Activated naive CD4-positive, alpha-beta T cell treated with anti-CD3 and anti-CD28 coated beads, Interleukin-2, amount 10 ng/mL, durations not matched to agents 7 days and 5 days (primary cell): ENCODE measurements at regions of chr22 and their contacts with region 1.

Region 1: GRCh38 chr22:43993027-43993760 is 30.9 kb upstream of the PARVB start:
- DNase-seq: peak; percentile 69
- H3K4me3 Mint-ChIP-seq: no peak overlapping the region
- H3K27ac Mint-ChIP-seq: no peak overlapping the region
- H3K4me1 Mint-ChIP-seq: peaks cover 33% of the 10 kb centered on the region
- H3K27me3 Mint-ChIP-seq: no peaks in the 10 kb centered on the region

Region 2: GRCh38 chr22:44003405-44004103 is 10.4 kb after region 1 on chr22:
- CTCF ChIA-PET with region 1: interaction called, 10 read pairs
- DNase-seq: no peak
- H3K4me3 Mint-ChIP-seq: no peak overlapping the region
- H3K27ac Mint-ChIP-seq: no peak overlapping the region
- H3K4me1 Mint-ChIP-seq: no peaks in the 10 kb centered on the region
- H3K27me3 Mint-ChIP-seq: no peaks in the 10 kb centered on the region

Region 3: GRCh38 chr22:44026630-44027511 is 33.7 kb after region 1 on chr22:
- CTCF ChIA-PET with region 1: interaction called, 14 read pairs
- DNase-seq: peak; percentile 79
- H3K4me3 Mint-ChIP-seq: peak overlapping the region; percentile 58
- H3K27ac Mint-ChIP-seq: peak overlapping the region; percentile 85
- H3K4me1 Mint-ChIP-seq: peaks cover 49% of the 10 kb centered on the region
- H3K27me3 Mint-ChIP-seq: peaks cover 35% of the 10 kb centered on the region

Region 4: DNA sequence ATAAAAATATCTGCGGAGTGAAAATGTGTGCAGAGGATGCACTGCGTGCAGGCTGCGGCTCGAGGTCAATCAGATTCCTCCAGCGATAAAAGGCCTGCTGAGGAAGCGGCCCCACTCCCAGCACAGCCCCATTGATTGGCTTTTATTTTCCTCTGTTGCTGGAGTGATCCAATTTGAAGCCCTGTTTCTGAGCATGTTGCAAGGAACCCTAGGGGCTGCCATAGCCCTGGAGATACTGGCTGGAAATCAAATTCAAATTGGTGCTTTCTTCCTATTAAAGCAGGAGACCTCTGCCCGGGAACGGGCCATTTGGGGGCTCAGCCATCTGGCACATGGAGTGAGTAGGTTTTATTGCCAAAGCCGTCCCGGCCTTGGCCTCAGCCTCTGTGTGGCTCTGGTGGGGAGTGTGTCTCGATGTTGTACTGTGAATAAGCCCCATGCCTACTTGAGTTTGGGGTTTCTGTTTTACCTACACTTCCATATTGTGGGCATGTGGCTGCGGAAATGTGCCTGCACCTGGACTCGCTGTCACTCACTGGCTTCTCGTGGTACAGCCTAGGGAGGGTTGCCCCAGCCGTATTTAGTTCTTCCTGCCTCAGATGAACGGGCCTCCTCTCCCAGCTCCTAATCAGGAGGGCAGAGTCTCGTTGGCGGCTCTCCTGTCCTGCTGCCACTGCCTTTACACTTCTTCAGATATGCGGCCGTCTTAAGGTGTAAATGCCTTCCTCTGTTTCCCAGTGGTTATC is 56.5 kb after region 1 on chr22:
- CTCF ChIA-PET with region 1: interaction called, 10 read pairs
- DNase-seq: no peak
- H3K4me3 Mint-ChIP-seq: no peak overlapping the region
- H3K27ac Mint-ChIP-seq: peak overlapping the region; percentile 15
- H3K4me1 Mint-ChIP-seq: peaks cover 40% of the 10 kb centered on the region
- H3K27me3 Mint-ChIP-seq: peaks cover 6% of the 10 kb centered on the region

Region 5: DNA sequence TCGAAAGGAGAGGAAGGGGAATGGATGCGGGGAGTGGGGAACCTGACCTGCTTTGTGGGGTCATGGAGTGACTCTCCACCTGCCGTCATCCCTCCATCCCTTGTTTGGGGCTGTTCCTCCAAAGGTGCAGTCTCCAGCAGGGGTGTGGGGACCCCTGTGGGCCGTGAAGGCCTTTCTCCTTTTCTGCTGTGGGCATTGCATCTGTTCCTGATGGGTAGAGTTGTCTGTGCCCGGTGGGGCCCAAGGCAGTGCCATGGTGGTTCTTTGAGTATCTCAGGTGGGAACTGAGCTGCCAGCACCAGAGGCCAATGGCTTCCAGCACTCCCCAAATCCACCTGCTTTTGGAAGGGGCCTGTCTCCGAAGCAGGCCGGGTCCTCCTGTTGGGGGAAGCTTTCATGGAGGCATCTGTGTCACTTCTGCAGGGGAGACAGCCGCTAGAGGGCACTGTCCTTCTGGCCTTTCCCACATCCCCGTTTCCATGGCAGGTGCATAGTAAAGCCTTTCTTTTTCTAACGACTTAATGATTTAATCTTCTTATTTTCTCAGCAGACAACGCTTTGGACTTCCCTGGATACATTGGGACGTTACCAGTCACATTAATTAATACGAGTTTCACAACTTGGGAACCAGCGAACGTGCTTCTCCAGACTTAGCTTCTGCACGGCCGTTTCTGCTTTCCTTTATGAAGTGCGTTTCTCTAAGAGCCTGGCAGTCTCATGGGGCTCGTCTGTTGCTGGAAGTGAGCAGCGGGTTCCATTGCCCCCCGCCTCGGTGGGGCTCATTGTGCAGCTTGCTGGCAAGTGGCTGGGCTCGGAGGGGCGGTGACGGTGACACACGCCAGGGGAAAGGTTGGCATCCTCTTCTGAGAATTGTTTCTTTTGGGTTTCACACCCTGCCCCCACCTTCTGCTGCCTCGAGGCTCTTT is 88.0 kb after region 1 on chr22:
- CTCF ChIA-PET with region 1: interaction called, 168 read pairs
- DNase-seq: peak; percentile 84
- H3K4me3 Mint-ChIP-seq: no peak overlapping the region
- H3K27ac Mint-ChIP-seq: no peak overlapping the region
- H3K4me1 Mint-ChIP-seq: no peaks in the 10 kb centered on the region
- H3K27me3 Mint-ChIP-seq: no peaks in the 10 kb centered on the region

Region 6: DNA sequence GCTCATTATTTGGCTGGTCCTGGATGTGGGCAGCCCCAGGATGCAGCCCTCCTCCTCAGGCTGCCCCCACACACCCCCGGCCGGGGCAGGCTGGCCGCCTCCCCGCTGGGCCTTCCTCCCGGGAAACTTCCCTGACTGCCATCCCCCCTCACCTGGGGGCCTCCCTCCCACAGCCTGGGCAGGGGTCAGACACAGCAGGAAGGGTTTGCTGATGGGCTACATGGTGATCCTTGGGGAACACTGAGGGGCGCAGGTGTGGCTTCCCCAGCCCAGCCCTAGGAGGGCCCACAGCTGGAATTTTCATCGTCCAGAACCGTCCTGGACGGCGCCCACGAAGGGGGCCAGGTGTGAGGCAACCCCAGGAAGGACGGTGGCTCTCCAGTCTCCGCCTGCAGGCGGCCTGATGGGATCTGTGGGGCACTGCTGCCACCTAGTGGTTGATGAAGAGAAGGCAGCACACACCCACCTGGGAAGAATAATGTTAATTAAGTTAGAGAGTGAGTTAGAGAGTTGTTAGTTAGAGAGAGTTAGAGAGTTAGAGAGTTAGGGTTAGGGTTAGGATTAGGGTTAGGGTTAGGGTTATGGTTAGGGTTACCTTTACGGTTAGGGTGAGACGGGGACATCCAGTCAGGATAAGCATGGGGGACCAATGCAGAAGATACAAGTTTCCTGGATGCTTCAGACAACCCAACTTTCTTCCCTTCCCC is 632.9 kb after region 1 on chr22:
- CTCF ChIA-PET with region 1: interaction called, 39 read pairs
- DNase-seq: peak; percentile 85
- H3K4me3 Mint-ChIP-seq: no peak overlapping the region
- H3K27ac Mint-ChIP-seq: no peak overlapping the region
- H3K4me1 Mint-ChIP-seq: peaks cover 4% of the 10 kb centered on the region
- H3K27me3 Mint-ChIP-seq: peaks cover 36% of the 10 kb centered on the region